Activated CD8-positive, alpha-beta memory T cell treated with anti-CD3 and anti-CD28 coated beads, Interleukin-2, amount 10 ng/mL, durations not matched to agents 7 days and 5 days (primary cell): ENCODE measurements at regions of chr12 and their contacts with region 1.

Region 1: GRCh38 chr12:69359531-69360347 is at the start of gene YEATS4:
- DNase-seq: peak; percentile 95
- ATAC-seq: peak; percentile 87
- H3K4me3 Mint-ChIP-seq: peak within 1 kb of the TSS; percentile 97
- H3K27ac Mint-ChIP-seq: peak within 1 kb of the TSS; percentile 95
- H3K4me1 Mint-ChIP-seq: peaks cover 40% of the 10 kb centered on the region
- H3K27me3 Mint-ChIP-seq: peaks cover 2% of the 10 kb centered on the region
- total RNA-seq, gene YEATS4: 40.9 to 47.3 TPM

Region 2: GRCh38 chr12:69330475-69331473 is 29.0 kb before region 1 on chr12:
- CTCF ChIA-PET with region 1: interaction called, 22 read pairs
- DNase-seq: peak; percentile 74
- ATAC-seq: peak; percentile 85
- H3K4me3 Mint-ChIP-seq: peak overlapping the region; percentile 76
- H3K27ac Mint-ChIP-seq: peak overlapping the region; percentile 92
- H3K4me1 Mint-ChIP-seq: peaks cover 34% of the 10 kb centered on the region
- H3K27me3 Mint-ChIP-seq: no peaks in the 10 kb centered on the region

Region 3: GRCh38 chr12:69585189-69586062 is 225.7 kb after region 1 on chr12 and contains the start of gene CCT2:
- CTCF ChIA-PET with region 1: interaction called, 25 read pairs
- DNase-seq: peak; percentile 97
- ATAC-seq: peak; percentile 94
- H3K4me3 Mint-ChIP-seq: peak within 1 kb of the TSS; percentile 89
- H3K27ac Mint-ChIP-seq: peak within 1 kb of the TSS; percentile 94
- H3K4me1 Mint-ChIP-seq: peaks cover 28% of the 10 kb centered on the region
- H3K27me3 Mint-ChIP-seq: no peaks in the 10 kb centered on the region
- total RNA-seq, gene CCT2: 193 to 271 TPM

Region 4: DNA sequence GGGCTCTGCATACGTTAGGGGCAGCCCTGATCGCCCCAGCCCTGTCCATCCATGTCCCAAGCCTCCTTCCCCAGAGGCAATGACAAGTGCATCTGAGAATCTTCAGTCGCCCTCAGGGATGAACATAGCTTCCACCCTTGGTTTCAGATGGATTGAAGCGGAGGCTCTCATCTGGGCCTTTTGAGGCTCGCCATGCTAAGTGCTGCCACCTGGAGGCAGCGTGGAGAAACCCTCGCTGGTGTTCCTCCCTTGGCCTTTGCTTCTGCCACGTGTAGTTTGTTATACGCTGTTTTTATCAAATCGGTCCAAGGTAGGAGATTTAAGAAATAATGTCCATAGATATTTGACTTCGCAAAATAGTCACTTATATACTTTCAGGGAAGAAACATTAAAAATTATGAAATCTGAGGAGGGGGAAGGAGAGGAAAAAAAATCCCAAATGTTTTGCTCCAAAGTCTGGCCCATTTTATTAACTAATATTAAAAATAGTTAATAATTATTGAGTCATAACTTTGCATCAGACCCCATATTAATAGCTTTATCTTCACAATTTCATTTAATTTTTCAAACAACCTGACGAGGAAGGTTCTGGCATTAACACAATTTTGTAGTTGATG is 279.8 kb after region 1 on chr12:
- CTCF ChIA-PET with region 1: interaction called, 42 read pairs
- DNase-seq: peak; percentile 71
- ATAC-seq: peak; percentile 89
- H3K4me3 Mint-ChIP-seq: no peak overlapping the region
- H3K27ac Mint-ChIP-seq: no peak overlapping the region
- H3K4me1 Mint-ChIP-seq: no peaks in the 10 kb centered on the region
- H3K27me3 Mint-ChIP-seq: peaks cover 2% of the 10 kb centered on the region